ENCODE measurements at regions of chr1 and their contacts with region 1.

Region 1: GRCh38 chr1:212477014-212477679 is 44.4 kb downstream of the NENF start:
- DNase-seq: peak; percentile 75
- ATAC-seq: peak; percentile 96

Region 2: DNA sequence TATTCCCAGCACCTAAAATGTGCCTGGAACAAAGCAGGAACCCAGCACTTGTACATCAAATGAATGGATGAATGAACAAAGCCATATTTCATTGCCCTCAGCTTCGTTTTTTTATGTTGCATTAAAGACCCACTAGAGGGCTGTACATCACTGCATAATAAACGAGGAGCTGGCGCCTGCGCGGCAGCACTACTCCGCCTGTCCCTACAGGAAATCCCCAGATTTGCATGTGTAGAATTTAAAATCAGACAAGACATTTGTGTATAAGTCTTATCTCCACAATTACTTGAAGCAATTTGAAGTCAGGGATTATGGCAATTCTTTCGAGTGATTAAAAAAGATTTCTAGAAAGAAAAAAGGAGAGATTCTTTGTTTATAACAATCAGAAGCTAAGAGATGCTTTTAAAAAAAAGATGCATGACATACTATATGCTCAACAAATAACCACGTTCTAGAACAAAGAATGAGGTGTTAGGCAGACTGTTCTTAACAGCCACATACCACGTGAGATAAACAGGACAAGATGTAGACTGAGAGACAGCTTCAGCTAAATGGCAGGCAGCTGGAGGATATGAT is 796.3 kb before region 1 on chr1:
- intact Hi-C with region 1: loop called (anchors 10 kb)
- DNase-seq: peak; percentile 76
- ATAC-seq: peak; percentile 91

Region 3: DNA sequence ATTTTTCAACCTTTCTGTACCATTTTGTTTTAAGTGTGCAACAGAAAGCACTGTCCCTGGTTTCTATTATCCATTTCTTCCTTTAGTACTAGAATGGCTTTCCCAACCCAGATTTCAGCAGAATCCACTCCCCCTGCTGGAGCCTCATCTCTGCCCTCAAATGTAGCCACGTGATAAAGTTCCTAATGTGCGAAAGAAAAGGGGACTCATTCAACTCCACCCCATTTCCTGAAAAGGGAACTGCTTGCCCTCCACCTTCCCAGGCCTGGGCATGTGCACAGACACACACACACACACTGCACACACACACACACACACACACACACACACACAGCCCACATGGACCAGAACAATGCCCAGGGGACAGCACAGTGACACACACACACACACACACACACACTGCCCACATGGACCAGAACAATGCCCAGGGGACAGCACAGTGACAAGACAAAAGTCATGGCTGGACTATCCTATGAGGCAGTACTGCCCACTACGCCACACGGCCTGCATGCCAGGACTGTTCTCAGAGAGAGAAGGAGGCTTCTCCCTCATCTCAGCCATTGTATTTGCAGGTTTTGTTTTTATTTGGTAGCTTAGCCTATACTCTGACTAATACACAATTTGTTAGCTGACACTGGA is 95.6 kb before region 1 on chr1:
- intact Hi-C with region 1: no loop called
- DNase-seq: no peak
- ATAC-seq: no peak

Region 4: DNA sequence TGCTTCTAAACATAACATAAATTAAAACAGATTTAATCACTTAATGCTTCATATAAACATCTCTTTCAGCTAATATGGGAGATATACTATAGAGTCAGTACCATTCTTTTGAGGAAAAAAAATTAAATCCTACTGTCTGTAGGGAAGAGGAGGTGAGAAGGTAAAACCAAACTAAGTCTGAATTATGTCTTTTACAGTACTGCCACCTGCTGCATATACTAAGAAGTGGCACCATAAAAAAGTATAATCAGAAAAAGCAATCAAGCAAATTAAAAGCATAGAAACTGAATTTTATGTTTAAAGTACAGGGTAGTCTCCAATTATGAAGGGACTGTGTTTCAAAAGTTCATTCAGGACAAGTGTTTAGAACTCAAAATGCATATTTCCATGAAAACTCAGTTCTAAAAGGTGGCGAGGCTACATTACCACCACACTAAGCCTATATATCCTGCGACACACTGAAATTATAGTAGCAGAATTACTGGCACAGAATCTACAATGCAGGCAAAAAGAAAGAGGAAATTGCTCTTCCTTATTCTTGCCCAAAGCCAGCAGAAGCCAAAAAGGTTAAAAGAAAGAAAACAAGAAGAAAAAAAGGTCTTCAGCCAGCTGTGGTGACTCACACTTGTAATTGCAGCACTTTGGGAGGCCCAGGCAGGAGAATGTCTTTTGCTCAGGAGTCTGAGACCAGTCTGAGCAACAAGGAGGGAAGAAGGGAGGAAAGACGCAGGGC is 305.4 kb after region 1 on chr1:
- intact Hi-C with region 1: loop called (anchors 5 kb)
- DNase-seq: no peak
- ATAC-seq: peak; percentile 48

Measured in left ventricle myocardium superior (tissue), 1 donor.